ENCODE measurements at regions of chr12 and their contacts with region 1.

Region 1: GRCh38 chr12:112382232-112382796 is at the start of gene HECTD4:
- DNase-seq: peak; percentile 34
- ATAC-seq: peak; percentile 96
- H3K4me3 ChIP-seq: peak within 1 kb of the TSS; percentile 98
- H3K27ac ChIP-seq: peak within 1 kb of the TSS; percentile 82
- H3K4me1 ChIP-seq: no peaks in the 10 kb centered on the region; the same call in 1 of the 2 replicates
- H3K27me3 ChIP-seq: no peaks in the 10 kb centered on the region
- CTCF ChIP-seq: no peak
- EP300 ChIP-seq: no peak
- POLR2A ChIP-seq: peak; percentile 92
- RAD21 ChIP-seq: no peak
- polyA plus RNA-seq, gene HECTD4: 5.8 to 17.1 TPM

Region 2: GRCh38 chr12:111841750-111842555 is 540.4 kb before region 1 on chr12 and contains the start of gene MAPKAPK5:
- CTCF ChIA-PET with region 1: no interaction called
- POLR2A ChIA-PET with region 1: no interaction called
- RAD21 ChIA-PET with region 1: no interaction called
- SMC1A ChIA-PET with region 1: no interaction called
- in situ Hi-C with region 1: no loop called
- intact Hi-C with region 1: loop called (anchors 10 kb)
- DNase-seq: peak; percentile 85
- ATAC-seq: peak; percentile 83
- H3K4me3 ChIP-seq: peak within 1 kb of the TSS; percentile 97
- H3K27ac ChIP-seq: peak within 1 kb of the TSS; percentile 88
- H3K4me1 ChIP-seq: no peaks in the 10 kb centered on the region
- H3K27me3 ChIP-seq: no peaks in the 10 kb centered on the region
- CTCF ChIP-seq: no peak
- EP300 ChIP-seq: 0 out of 4 replicates have a peak, but pooled peaks of 1 of the 2 experiments have one; percentile 49
- POLR2A ChIP-seq: peak; percentile 92
- RAD21 ChIP-seq: no peak
- polyA plus RNA-seq, gene MAPKAPK5: 12.6 to 14.4 TPM

Region 3: GRCh38 chr12:112012775-112013600 is 369.3 kb before region 1 on chr12 and contains the starts of genes ERP29 and TMEM116:
- CTCF ChIA-PET with region 1: interaction called, 4 read pairs
- POLR2A ChIA-PET with region 1: interaction called, 3 read pairs
- RAD21 ChIA-PET with region 1: interaction called, 5 read pairs
- SMC1A ChIA-PET with region 1: interaction called, 4 read pairs
- in situ Hi-C with region 1: no loop called
- intact Hi-C with region 1: loop called (anchors 10 kb)
- DNase-seq: peak; percentile 98
- ATAC-seq: peak; percentile 82
- H3K4me3 ChIP-seq: peak within 1 kb of the TSS; percentile 97
- H3K27ac ChIP-seq: peak within 1 kb of the TSS; percentile 97
- H3K4me1 ChIP-seq: peaks cover 16% of the 10 kb centered on the region; the same call in 1 of the 2 replicates
- H3K27me3 ChIP-seq: no peaks in the 10 kb centered on the region
- CTCF ChIP-seq: peak; percentile 45 to 58 (median 50); a peak in 5 of 6 replicates
- EP300 ChIP-seq: 0 out of 4 replicates have a peak, but pooled peaks of 1 of the 2 experiments have one; percentile 10
- POLR2A ChIP-seq: peak; percentile 89
- RAD21 ChIP-seq: peak; percentile 34
- polyA plus RNA-seq, gene ERP29: 47.1 to 119 TPM
- polyA plus RNA-seq, gene TMEM116: 7.9 to 13.5 TPM

Region 4: DNA sequence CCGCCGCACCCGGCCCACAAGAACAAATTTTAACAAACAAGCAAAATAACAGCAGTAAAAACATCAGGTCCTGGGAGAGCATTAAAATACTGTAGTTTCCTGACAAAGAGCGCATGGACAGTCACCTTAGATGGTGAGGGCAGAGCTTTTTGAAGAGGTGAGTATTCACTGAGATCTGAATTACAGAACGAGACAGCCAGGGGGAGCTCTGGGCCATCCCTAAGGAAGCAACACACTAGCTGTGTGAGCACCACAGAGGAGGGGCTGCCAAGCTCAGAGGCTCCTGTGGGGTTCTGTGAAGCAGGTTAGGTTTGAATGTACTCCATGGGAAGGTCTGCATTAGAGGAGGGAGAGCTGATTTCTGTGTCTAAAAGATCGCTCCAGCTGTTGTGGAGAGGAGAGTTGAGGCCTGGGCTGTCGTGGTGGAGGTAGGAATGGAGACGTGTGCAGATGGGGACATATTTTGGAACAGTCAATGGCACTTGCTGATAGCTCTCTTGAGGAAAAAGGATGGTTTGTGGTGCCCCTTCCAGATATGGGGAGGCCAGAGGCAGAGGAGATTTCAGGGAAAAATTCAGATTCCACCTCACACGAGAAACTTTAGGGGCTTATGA is 184.1 kb before region 1 on chr12:
- CTCF ChIA-PET with region 1: interaction called, 140 read pairs
- POLR2A ChIA-PET with region 1: no interaction called
- RAD21 ChIA-PET with region 1: interaction called, 76 read pairs
- SMC1A ChIA-PET with region 1: interaction called, 48 read pairs
- in situ Hi-C with region 1: loop called (anchors 5 kb)
- intact Hi-C with region 1: loop called (anchors 1 kb)
- DNase-seq: no peak
- ATAC-seq: peak; percentile 99
- H3K4me3 ChIP-seq: no peak overlapping the region
- H3K27ac ChIP-seq: no peak overlapping the region
- H3K4me1 ChIP-seq: no peaks in the 10 kb centered on the region
- H3K27me3 ChIP-seq: no peaks in the 10 kb centered on the region
- CTCF ChIP-seq: peak; percentile 67 to 72 (median 71)
- EP300 ChIP-seq: no peak
- POLR2A ChIP-seq: no peak
- RAD21 ChIP-seq: peak; percentile 76

Region 5: GRCh38 chr12:112270673-112271072 is 111.6 kb before region 1 on chr12:
- CTCF ChIA-PET with region 1: interaction called, 6 read pairs
- POLR2A ChIA-PET with region 1: no interaction called
- RAD21 ChIA-PET with region 1: interaction called, 3 read pairs
- SMC1A ChIA-PET with region 1: interaction called, 5 read pairs
- in situ Hi-C with region 1: no loop called
- intact Hi-C with region 1: loop called (anchors 10 kb)
- DNase-seq: no peak
- ATAC-seq: no peak
- H3K4me3 ChIP-seq: no peak overlapping the region
- H3K27ac ChIP-seq: no peak overlapping the region
- H3K4me1 ChIP-seq: no peaks in the 10 kb centered on the region
- H3K27me3 ChIP-seq: no peaks in the 10 kb centered on the region
- CTCF ChIP-seq: no peak
- EP300 ChIP-seq: no peak
- POLR2A ChIP-seq: no peak
- RAD21 ChIP-seq: no peak

Region 6: DNA sequence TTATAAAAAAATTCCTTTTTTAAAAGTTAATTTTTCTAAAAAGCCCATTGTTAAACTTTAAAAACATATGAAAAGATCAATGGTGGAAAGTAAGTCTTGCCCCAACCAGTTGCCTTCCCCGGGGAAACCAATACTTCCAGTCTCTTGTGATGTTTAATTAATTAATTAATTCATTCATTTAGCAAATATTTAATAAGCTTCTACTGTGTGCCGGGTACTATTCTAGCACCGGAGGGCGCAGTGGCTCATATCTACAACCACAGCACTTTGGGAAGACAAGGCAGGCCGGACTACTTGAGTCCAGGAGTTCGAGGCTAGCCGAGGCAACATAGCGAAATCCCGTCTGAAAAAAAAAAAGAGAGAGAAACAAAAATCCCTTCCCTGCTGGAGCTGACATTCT is 87.5 kb before region 1 on chr12:
- CTCF ChIA-PET with region 1: interaction called, 7 read pairs
- POLR2A ChIA-PET with region 1: no interaction called
- RAD21 ChIA-PET with region 1: interaction called, 10 read pairs
- SMC1A ChIA-PET with region 1: no interaction called
- in situ Hi-C with region 1: no loop called
- intact Hi-C with region 1: no loop called
- DNase-seq: no peak
- ATAC-seq: no peak
- H3K4me3 ChIP-seq: no peak overlapping the region
- H3K27ac ChIP-seq: no peak overlapping the region
- H3K4me1 ChIP-seq: no peaks in the 10 kb centered on the region
- H3K27me3 ChIP-seq: no peaks in the 10 kb centered on the region
- CTCF ChIP-seq: peak in 1 of 3 experiments; percentile 14; a peak in 1 of 6 replicates
- EP300 ChIP-seq: no peak
- POLR2A ChIP-seq: no peak
- RAD21 ChIP-seq: peak; percentile 41; the same call in 1 of the 2 replicates

Region 7: DNA sequence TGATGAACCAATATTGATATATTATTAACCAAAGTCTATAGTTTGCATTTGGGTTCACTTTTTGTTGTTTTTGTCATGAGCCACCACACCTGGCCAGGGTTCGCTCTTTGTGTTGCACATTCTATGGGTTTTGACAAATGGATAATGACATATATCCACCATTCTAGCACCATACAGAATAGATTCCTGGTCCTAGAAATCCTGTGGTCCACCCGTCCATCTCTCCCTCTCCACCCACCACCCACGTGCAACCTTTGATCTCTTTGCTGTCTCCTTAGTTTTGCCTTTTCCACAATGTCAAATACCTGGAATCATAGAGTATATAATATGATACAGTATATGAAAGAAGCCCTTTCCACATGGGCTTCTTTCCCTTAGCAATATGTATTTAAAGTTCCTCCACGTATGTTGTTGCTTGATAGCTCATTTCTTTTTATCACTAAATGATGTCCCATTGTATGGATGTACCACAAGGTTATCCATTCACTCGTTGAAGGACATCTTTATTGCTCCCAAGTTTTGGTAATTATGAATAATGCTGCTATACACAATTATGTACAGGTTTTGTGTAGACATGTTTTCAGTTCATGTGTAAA is 19.7 kb after region 1 on chr12:
- CTCF ChIA-PET with region 1: interaction called, 13 read pairs
- POLR2A ChIA-PET with region 1: interaction called, 3 read pairs
- RAD21 ChIA-PET with region 1: no interaction called
- SMC1A ChIA-PET with region 1: interaction called, 8 read pairs
- in situ Hi-C with region 1: no loop called
- intact Hi-C with region 1: no loop called
- DNase-seq: no peak
- ATAC-seq: no peak; the same call in 2 of the 3 replicates
- H3K4me3 ChIP-seq: no peak overlapping the region
- H3K27ac ChIP-seq: no peak overlapping the region
- H3K4me1 ChIP-seq: no peaks in the 10 kb centered on the region
- H3K27me3 ChIP-seq: no peaks in the 10 kb centered on the region; a peak in 1 of 4 replicates
- CTCF ChIP-seq: no peak
- EP300 ChIP-seq: no peak
- POLR2A ChIP-seq: no peak
- RAD21 ChIP-seq: no peak

Region 8: GRCh38 chr12:112496496-112496895 is 114.2 kb after region 1 on chr12:
- CTCF ChIA-PET with region 1: no interaction called
- POLR2A ChIA-PET with region 1: no interaction called
- RAD21 ChIA-PET with region 1: no interaction called
- SMC1A ChIA-PET with region 1: no interaction called
- in situ Hi-C with region 1: no loop called
- intact Hi-C with region 1: no loop called
- DNase-seq: peak; percentile 40
- ATAC-seq: peak; percentile 98
- H3K4me3 ChIP-seq: no peak overlapping the region
- H3K27ac ChIP-seq: no peak overlapping the region
- H3K4me1 ChIP-seq: peaks cover 4% of the 10 kb centered on the region; the same call in 1 of the 2 replicates
- H3K27me3 ChIP-seq: no peaks in the 10 kb centered on the region
- CTCF ChIP-seq: no peak
- EP300 ChIP-seq: 0 out of 4 replicates have a peak, but pooled peaks of 1 of the 2 experiments have one; percentile 25
- POLR2A ChIP-seq: no peak
- RAD21 ChIP-seq: no peak

Measured in GM12878 (cell line).